Heart right ventricle (tissue), 16 donors: ENCODE measurements at regions of chrX and their contacts with region 1.

Region 1: GRCh38 chrX:101097546-101098453 is at the start of gene CENPI:
- DNase-seq: peak; percentile 91 to 92
- ATAC-seq: peak; percentile 100
- H3K4me3 ChIP-seq: peak within 1 kb of the TSS; percentile 13 to 60 (median 56)
- H3K27ac ChIP-seq: peak within 1 kb of the TSS; percentile 34 to 86 (median 81)
- H3K4me1 ChIP-seq: peaks cover 0 to 13% (median 0%) of the 10 kb centered on the region in 9 donors
- H3K27me3 ChIP-seq: peaks cover 0 to 7% (median 0%) of the 10 kb centered on the region in 7 donors
- CTCF ChIP-seq: no peak
- total RNA-seq, gene CENPI: 0.15 to 2.5 (median 0.53) TPM

Region 2: GRCh38 chrX:100819837-100820666 is 277.7 kb before region 1 on chrX and contains the start of gene CSTF2:
- intact Hi-C with region 1: loop called in 1 of 10 experiments (anchors 5 kb)
- DNase-seq: peak; percentile 71 to 80
- ATAC-seq: peak; percentile 99 to 100 (median 100)
- H3K4me3 ChIP-seq: peak within 1 kb of the TSS; percentile 34 to 75 (median 66)
- H3K27ac ChIP-seq: peak within 1 kb of the TSS in 8 of 10 donors; percentile 26 to 62 (median 57)
- H3K4me1 ChIP-seq: peaks cover 0 to 7% (median 3%) of the 10 kb centered on the region in 9 donors
- H3K27me3 ChIP-seq: peaks cover 0 to 37% (median 0%) of the 10 kb centered on the region in 7 donors
- CTCF ChIP-seq: peak in 4 of 9 donors; percentile 4 to 33 (median 18)
- total RNA-seq, gene CSTF2: 5.7 to 10.7 (median 8.0) TPM

Region 3: GRCh38 chrX:101051549-101052302 is 46.1 kb before region 1 on chrX and contains the start of gene TRMT2B:
- intact Hi-C with region 1: loop called in 2 of 10 experiments (anchors 1 to 5 kb)
- DNase-seq: peak; percentile 73 to 74
- ATAC-seq: peak; percentile 95 to 99 (median 98)
- H3K4me3 ChIP-seq: peak within 1 kb of the TSS; percentile 24 to 79 (median 68)
- H3K27ac ChIP-seq: peak within 1 kb of the TSS; percentile 69 to 93 (median 89)
- H3K4me1 ChIP-seq: peaks cover 0 to 8% (median 0%) of the 10 kb centered on the region in 9 donors
- H3K27me3 ChIP-seq: no peaks in the 10 kb centered on the region
- CTCF ChIP-seq: no peak
- total RNA-seq, gene TRMT2B: 12.8 to 21.2 (median 16.3) TPM

Region 4: DNA sequence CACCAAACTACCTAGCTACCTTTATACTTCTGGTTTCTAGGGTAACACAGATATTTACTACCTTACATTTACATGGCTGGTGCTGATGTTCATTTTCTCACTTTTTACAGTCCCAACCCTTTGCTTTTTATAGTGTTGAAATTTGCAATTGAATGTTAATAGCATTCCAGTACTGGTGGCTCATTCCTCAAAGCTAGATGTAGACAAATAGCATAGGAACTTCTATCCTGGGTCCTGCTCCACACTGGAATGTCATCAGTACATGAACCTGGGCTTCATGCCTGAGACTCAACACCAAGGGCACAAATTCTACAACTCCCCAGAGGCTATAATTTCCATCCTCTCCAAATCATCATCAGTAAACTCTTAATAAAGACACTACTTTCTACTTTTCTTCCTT is 35.6 kb before region 1 on chrX:
- intact Hi-C with region 1: no loop called
- DNase-seq: no peak
- ATAC-seq: no peak
- H3K4me3 ChIP-seq: no peak overlapping the region
- H3K27ac ChIP-seq: no peak overlapping the region
- H3K4me1 ChIP-seq: no peaks in the 10 kb centered on the region
- H3K27me3 ChIP-seq: peaks cover 0 to 5% (median 0%) of the 10 kb centered on the region in 7 donors
- CTCF ChIP-seq: no peak